Thyroid gland (tissue), 4 donors: ENCODE measurements at regions of chr12 and their contacts with region 1.

Region 1: GRCh38 chr12:109385339-109386067 is 37.8 kb downstream of the MYO1H start:
- DNase-seq: no peak
- H3K4me3 ChIP-seq: no peak overlapping the region
- H3K27ac ChIP-seq: no peak overlapping the region
- H3K4me1 ChIP-seq: no peaks in the 10 kb centered on the region
- H3K27me3 ChIP-seq: no peaks in the 10 kb centered on the region
- CTCF ChIP-seq: peak in 3 of 6 experiments; percentile 38 to 45 (median 43)
- POLR2A ChIP-seq: no peak

Region 2: GRCh38 chr12:109264095-109264942 is 121.2 kb before region 1 on chr12:
- intact Hi-C with region 1: loop called (anchors 10 kb)
- DNase-seq: peak; percentile 64 to 77
- H3K4me3 ChIP-seq: no peak overlapping the region
- H3K27ac ChIP-seq: no peak overlapping the region
- H3K4me1 ChIP-seq: no peaks in the 10 kb centered on the region
- H3K27me3 ChIP-seq: no peaks in the 10 kb centered on the region
- CTCF ChIP-seq: peak; percentile 37 to 77 (median 58)
- POLR2A ChIP-seq: no peak